CD8-positive, alpha-beta memory T cell (primary cell): ENCODE measurements at regions of chr11 and their contacts with region 1.

Region 1: DNA sequence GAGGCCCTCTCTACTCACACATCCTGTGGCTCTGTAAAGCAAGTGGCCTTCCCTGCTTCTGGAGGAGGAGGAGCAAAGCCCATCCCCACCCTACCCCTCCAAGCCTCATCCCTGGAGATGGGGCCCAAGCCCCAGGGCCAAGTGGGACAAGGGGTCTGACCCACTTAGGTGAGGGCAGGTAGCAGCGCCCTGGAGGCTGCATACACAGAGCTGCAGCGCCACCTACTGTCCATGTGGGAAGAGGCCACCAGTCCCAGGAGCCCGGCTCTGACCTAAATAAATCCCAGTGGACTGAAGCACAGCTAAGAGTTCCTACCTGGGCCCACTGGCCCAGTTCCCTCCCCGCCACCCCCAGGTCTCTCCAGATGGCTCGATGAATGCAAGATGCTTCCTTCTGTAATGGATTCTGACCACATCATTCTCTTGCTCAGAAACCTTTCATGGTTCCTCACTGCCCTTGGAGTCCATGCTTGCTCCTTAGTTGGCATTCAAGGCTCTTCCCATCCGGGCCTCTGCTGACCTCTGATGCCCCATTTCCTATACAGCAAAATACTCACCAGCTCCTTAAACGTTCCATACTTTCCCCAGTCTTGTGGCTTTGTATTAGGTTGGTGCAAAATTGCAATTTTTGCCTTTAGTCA is 62.1 kb downstream of the THAP12 start:
- DNase-seq: peak; percentile 72 to 88 (median 77)
- H3K4me3 ChIP-seq: no peak overlapping the region
- H3K4me3 Mint-ChIP-seq: no peak overlapping the region
- H3K27ac ChIP-seq: no peak overlapping the region
- H3K27ac Mint-ChIP-seq: no peak overlapping the region
- H3K4me1 ChIP-seq: no peaks in the 10 kb centered on the region
- H3K4me1 Mint-ChIP-seq: no peaks in the 10 kb centered on the region
- H3K27me3 ChIP-seq: peaks cover 15% of the 10 kb centered on the region
- H3K27me3 Mint-ChIP-seq: peaks cover 26 to 41% of the 10 kb centered on the region in 2 donors

Region 2: GRCh38 chr11:75896843-75897419 is 421.9 kb before region 1 on chr11:
- CTCF ChIA-PET with region 1: interaction called, 14 read pairs
- POLR2A ChIA-PET with region 1: no interaction called
- DNase-seq: peak in 2 of 5 donors; percentile 16 to 26
- H3K4me3 ChIP-seq: no peak overlapping the region
- H3K4me3 Mint-ChIP-seq: no peak overlapping the region
- H3K27ac ChIP-seq: no peak overlapping the region
- H3K27ac Mint-ChIP-seq: no peak overlapping the region
- H3K4me1 ChIP-seq: no peaks in the 10 kb centered on the region
- H3K4me1 Mint-ChIP-seq: peaks cover 0 to 4% (median 0%) of the 10 kb centered on the region in 3 donors
- H3K27me3 ChIP-seq: no peaks in the 10 kb centered on the region
- H3K27me3 Mint-ChIP-seq: no peaks in the 10 kb centered on the region

Region 3: GRCh38 chr11:76307396-76307795 is 11.5 kb before region 1 on chr11:
- CTCF ChIA-PET with region 1: interaction called, 12 read pairs
- POLR2A ChIA-PET with region 1: no interaction called
- DNase-seq: no peak
- H3K4me3 ChIP-seq: no peak overlapping the region
- H3K4me3 Mint-ChIP-seq: no peak overlapping the region
- H3K27ac ChIP-seq: no peak overlapping the region
- H3K27ac Mint-ChIP-seq: no peak overlapping the region
- H3K4me1 ChIP-seq: no peaks in the 10 kb centered on the region
- H3K4me1 Mint-ChIP-seq: no peaks in the 10 kb centered on the region
- H3K27me3 ChIP-seq: no peaks in the 10 kb centered on the region
- H3K27me3 Mint-ChIP-seq: peaks cover 4% of the 10 kb centered on the region in 2 donors

Region 4: DNA sequence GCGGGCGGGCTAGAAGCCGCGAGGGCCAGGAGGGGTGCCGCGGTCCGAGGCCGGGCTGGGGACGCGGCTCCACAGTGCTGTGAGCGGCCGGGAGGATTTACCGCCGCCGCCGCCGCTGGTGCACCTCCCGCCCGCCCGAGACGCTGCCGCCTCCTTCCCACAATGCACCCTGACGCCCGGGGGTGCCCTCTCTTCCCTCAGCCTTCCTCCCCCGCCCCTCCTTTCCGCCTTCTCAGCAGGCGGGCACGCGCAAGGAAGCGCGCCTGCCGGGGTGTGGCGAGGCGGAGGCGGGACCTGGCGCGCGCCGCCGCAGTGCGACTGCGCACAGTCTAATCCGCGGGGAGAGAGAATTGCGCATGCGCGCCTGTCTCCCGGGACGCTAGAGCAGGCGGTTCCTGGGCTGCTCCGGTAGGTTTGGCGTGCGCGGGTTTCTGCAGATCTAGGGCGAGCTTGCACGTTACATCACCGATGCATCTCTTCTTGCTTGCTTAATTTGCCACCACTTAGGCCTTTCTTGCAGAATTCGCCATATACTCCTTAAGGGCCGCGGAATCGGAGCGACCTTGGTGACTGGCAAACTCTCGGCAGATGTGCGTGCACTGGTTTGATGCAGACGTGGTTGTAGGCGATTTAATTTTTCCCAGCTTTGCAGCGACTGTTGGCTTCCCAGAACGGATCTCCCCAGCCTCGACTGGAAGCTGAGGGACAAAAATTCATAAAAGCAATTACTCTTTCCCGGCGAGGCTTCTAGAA is 62.3 kb after region 1 on chr11 and contains the starts of genes GVQW3 and THAP12:
- CTCF ChIA-PET with region 1: no interaction called
- POLR2A ChIA-PET with region 1: no interaction called
- DNase-seq: peak; percentile 94 to 99 (median 98)
- H3K4me3 ChIP-seq: peak within 1 kb of the TSS; percentile 97
- H3K4me3 Mint-ChIP-seq: peak within 1 kb of the TSS; percentile 92 to 98 (median 96)
- H3K27ac ChIP-seq: peak within 1 kb of the TSS; percentile 69
- H3K27ac Mint-ChIP-seq: peak within 1 kb of the TSS; percentile 82 to 98 (median 96)
- H3K4me1 ChIP-seq: peaks cover 35% of the 10 kb centered on the region
- H3K4me1 Mint-ChIP-seq: peaks cover 60 to 68% (median 67%) of the 10 kb centered on the region in 3 donors
- H3K27me3 ChIP-seq: no peaks in the 10 kb centered on the region
- H3K27me3 Mint-ChIP-seq: peaks cover 0 to 2% of the 10 kb centered on the region in 2 donors
- total RNA-seq, gene GVQW3: 2.5 TPM
- total RNA-seq, gene THAP12: 73.4 to 74.2 TPM